K562 (cell line): ENCODE measurements at regions of chr10 and their contacts with region 1.

Region 1: DNA sequence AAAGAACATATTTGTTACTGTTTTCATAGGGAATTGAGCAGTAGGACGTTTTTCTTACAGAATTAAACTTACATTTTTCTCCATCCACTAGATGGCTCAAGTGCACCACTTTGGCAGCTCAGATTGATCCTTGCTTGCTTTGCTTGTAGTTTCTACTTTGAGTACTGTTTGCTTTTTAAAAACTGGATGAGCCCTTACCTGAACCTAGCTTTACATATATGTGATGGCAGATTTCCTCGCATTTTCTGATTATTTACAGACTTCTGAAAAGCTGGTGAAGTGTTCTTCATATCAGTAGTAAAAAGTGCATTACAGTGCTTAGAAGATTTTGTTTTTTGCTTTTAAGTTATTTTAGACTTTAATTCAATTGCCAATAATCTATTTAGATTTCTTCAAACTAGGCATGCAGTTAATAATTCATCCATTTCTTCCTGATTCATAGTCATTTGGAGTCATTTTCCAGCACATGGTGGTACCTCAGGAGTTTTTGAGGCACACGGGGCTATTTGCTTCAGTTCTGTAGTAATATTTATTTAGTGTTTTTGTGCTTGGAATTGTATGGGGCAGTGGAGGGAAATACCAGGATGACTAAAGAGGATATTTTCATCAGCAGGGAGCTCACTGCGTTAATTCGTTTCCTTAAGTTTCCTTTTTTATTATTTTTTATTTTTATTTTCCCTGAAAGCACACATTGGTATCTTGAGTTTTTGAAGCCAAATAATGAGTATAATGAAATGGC is 57.3 kb downstream of the MAPK8 start:
- DNase-seq: peak; percentile 30 to 88 (median 50)
- ATAC-seq: peak; percentile 91
- H3K4me3 ChIP-seq: no peak overlapping the region
- H3K27ac ChIP-seq: peak overlapping the region; percentile 36; the same call in 2 of the 3 replicates
- H3K4me1 ChIP-seq: peaks cover 6 to 37% of the 10 kb centered on the region in 2 experiments
- H3K27me3 ChIP-seq: no peaks in the 10 kb centered on the region
- CTCF ChIP-seq: peak; percentile 82 to 96 (median 83)
- EP300 ChIP-seq: no peak
- POLR2A ChIP-seq: no peak
- RAD21 ChIP-seq: peak; percentile 98 to 100

Region 2: GRCh38 chr10:48414778-48415177 is 51.0 kb after region 1 on chr10:
- CTCF ChIA-PET with region 1: no interaction called
- POLR2A ChIA-PET with region 1: no interaction called
- in situ Hi-C with region 1: no loop called
- intact Hi-C with region 1: loop called (anchors 5 kb)
- DNase-seq: no peak
- ATAC-seq: no peak
- H3K4me3 ChIP-seq: no peak overlapping the region
- H3K27ac ChIP-seq: no peak overlapping the region
- H3K4me1 ChIP-seq: peaks cover 0 to 19% of the 10 kb centered on the region in 2 experiments; a peak in 3 of 5 replicates
- H3K27me3 ChIP-seq: no peaks in the 10 kb centered on the region
- CTCF ChIP-seq: no peak
- EP300 ChIP-seq: no peak
- POLR2A ChIP-seq: no peak
- RAD21 ChIP-seq: no peak

Region 3: GRCh38 chr10:48444266-48444665 is 80.5 kb after region 1 on chr10:
- CTCF ChIA-PET with region 1: interaction called, 3 read pairs
- POLR2A ChIA-PET with region 1: no interaction called
- in situ Hi-C with region 1: no loop called
- intact Hi-C with region 1: loop called (anchors 1 kb)
- DNase-seq: peak in 2 of 4 experiments; percentile 46 to 67
- ATAC-seq: peak; percentile 57
- H3K4me3 ChIP-seq: no peak overlapping the region
- H3K27ac ChIP-seq: no peak overlapping the region
- H3K4me1 ChIP-seq: peaks cover 0 to 16% of the 10 kb centered on the region in 2 experiments
- H3K27me3 ChIP-seq: no peaks in the 10 kb centered on the region
- CTCF ChIP-seq: peak; percentile 65 to 80 (median 67)
- EP300 ChIP-seq: no peak
- POLR2A ChIP-seq: no peak
- RAD21 ChIP-seq: peak; percentile 94 to 98

Region 4: DNA sequence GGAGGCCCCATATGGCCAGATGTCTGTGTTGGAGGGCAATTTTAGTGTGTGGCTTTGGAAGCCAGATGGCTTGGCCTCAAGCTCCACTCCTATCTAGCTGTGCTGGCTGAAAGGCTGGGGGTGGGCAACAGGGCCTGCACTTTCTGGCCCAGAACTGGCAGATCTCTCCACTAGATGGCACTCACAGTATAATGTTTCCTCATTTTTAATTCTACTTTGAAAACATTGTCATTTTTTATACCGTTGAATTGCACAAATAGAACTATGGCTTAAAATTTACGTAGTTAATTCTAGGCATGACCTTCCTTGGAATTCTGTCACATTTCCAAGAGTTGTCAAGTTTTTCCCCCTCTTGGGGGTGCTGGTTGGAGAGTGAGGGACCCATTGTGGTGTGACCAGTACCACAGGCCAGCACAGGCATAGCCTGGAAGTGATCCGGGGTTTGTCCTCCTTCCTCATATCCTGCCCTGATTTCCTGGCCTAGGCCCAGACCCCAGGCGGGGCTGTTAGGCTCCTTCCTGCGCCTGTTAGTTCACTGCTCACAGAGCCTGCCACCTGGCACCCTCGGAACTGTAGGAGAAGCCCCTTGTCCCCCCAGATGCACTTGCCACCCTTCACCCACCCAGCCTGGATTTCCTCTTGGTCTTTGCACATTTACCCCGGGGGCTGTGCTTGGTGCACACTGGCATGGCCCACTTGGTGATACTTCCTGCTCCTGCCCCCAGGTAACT is 188.2 kb after region 1 on chr10:
- CTCF ChIA-PET with region 1: no interaction called
- POLR2A ChIA-PET with region 1: no interaction called
- in situ Hi-C with region 1: no loop called
- intact Hi-C with region 1: loop called (anchors 1 kb)
- DNase-seq: peak; percentile 44 to 73 (median 64)
- ATAC-seq: peak; percentile 81
- H3K4me3 ChIP-seq: no peak overlapping the region
- H3K27ac ChIP-seq: no peak overlapping the region
- H3K4me1 ChIP-seq: no peaks in the 10 kb centered on the region
- H3K27me3 ChIP-seq: peaks cover 16 to 43% of the 10 kb centered on the region in 2 experiments; a peak in 4 of 5 replicates
- CTCF ChIP-seq: peak; percentile 74 to 86 (median 77)
- EP300 ChIP-seq: no peak
- POLR2A ChIP-seq: no peak
- RAD21 ChIP-seq: peak; percentile 64 to 74